ENCODE measurements at regions of chr12 and their contacts with region 1.

Region 1: GRCh38 chr12:6461401-6462233 is 8.9 kb downstream of the VAMP1 start:
- DNase-seq: peak; percentile 61 to 93 (median 85)
- ATAC-seq: peak; percentile 87 to 89 (median 88)
- H3K4me3 ChIP-seq: peak overlapping the region; percentile 29 to 30
- H3K4me3 Mint-ChIP-seq: peak overlapping the region; percentile 69 to 81 (median 69)
- H3K27ac ChIP-seq: peak overlapping the region; percentile 92
- H3K27ac Mint-ChIP-seq: peak overlapping the region; percentile 98
- H3K4me1 ChIP-seq: peaks cover 60 to 91% of the 10 kb centered on the region in 2 experiments
- H3K4me1 Mint-ChIP-seq: peaks cover 84 to 91% (median 90%) of the 10 kb centered on the region in 3 donors
- H3K27me3 ChIP-seq: no peaks in the 10 kb centered on the region
- H3K27me3 Mint-ChIP-seq: no peaks in the 10 kb centered on the region

Region 2: DNA sequence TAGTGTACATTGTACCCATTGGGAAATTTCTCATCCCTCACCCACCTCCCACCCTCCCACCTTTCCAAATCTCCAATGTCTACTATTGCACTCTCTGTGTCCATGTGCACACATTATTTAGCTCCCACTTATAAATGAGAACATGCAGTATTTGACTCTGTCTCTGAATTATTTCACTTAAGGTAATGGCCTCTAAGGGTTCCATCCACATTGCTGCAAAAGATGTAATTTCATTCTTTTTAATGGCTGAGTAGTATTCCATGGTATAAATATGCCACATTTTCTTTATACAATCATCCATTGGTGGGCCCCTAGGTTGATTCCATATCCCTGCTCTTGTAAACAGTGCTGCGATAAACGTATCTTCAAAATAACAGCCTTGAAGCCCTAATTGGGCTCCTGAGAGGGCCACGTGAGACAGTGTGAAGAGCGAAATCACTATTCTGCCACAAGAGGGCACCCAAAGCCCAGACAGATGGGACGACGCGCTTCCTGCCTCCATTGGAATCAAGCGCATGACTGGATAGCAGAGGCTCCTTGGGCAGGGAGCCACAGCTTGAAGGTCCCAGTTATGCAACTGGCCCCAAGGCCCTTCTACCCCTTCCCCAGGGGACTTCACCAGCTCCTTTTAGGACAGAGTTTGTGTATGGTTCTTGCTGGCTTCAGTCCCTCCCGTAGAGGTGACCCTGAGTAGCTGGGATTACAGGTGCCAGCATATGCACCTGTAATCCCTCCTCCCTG is 38.2 kb before region 1 on chr12:
- CTCF ChIA-PET with region 1: interaction called, 25 to 45 read pairs
- POLR2A ChIA-PET with region 1: interaction called, 3 to 4 read pairs
- DNase-seq: peak; percentile 56 to 95 (median 73)
- ATAC-seq: peak; percentile 74 to 82 (median 75)
- H3K4me3 ChIP-seq: no peak overlapping the region
- H3K4me3 Mint-ChIP-seq: peak overlapping the region in 1 of 3 donors; percentile 44
- H3K27ac ChIP-seq: peak overlapping the region; percentile 3
- H3K27ac Mint-ChIP-seq: peak overlapping the region; percentile 54 to 83
- H3K4me1 ChIP-seq: peaks cover 24 to 43% of the 10 kb centered on the region in 2 experiments
- H3K4me1 Mint-ChIP-seq: peaks cover 37 to 44% (median 38%) of the 10 kb centered on the region in 3 donors
- H3K27me3 ChIP-seq: no peaks in the 10 kb centered on the region
- H3K27me3 Mint-ChIP-seq: peaks cover 0 to 2% of the 10 kb centered on the region in 2 donors

Region 3: GRCh38 chr12:6451348-6452244 is 10.0 kb before region 1 on chr12 and contains the start of gene TAPBPL:
- CTCF ChIA-PET with region 1: interaction called, 3 to 24 read pairs
- POLR2A ChIA-PET with region 1: interaction called, 6 to 18 read pairs
- DNase-seq: peak; percentile 61 to 93 (median 80)
- ATAC-seq: peak; percentile 85 to 95 (median 88)
- H3K4me3 ChIP-seq: peak within 1 kb of the TSS; percentile 93 to 94
- H3K4me3 Mint-ChIP-seq: peak within 1 kb of the TSS; percentile 97 to 99 (median 98)
- H3K27ac ChIP-seq: peak within 1 kb of the TSS; percentile 98
- H3K27ac Mint-ChIP-seq: peak within 1 kb of the TSS; percentile 99 to 100
- H3K4me1 ChIP-seq: peaks cover 30 to 74% of the 10 kb centered on the region in 2 experiments
- H3K4me1 Mint-ChIP-seq: peaks cover 71 to 85% (median 76%) of the 10 kb centered on the region in 3 donors
- H3K27me3 ChIP-seq: no peaks in the 10 kb centered on the region
- H3K27me3 Mint-ChIP-seq: no peaks in the 10 kb centered on the region
- total RNA-seq, gene TAPBPL: 22.6 to 77.0 (median 60.3) TPM

Measured in T-cell (primary cell).